Common myeloid progenitor, CD34-positive (primary cell): ENCODE measurements at regions of chr15 and their contacts with region 1.

Region 1: GRCh38 chr15:74768771-74769342 is 13.0 kb upstream of the CSK start:
- DNase-seq: peak in 2 of 3 donors; percentile 68 to 69
- H3K4me3 ChIP-seq: peak overlapping the region in 2 of 7 experiments; percentile 26 to 48
- H3K27ac ChIP-seq: no peak overlapping the region
- H3K4me1 ChIP-seq: peaks cover 0 to 34% (median 16%) of the 10 kb centered on the region in 4 experiments
- H3K27me3 ChIP-seq: peaks cover 0 to 4% (median 0%) of the 10 kb centered on the region in 5 experiments

Region 2: GRCh38 chr15:74251131-74251811 is 517.6 kb before region 1 on chr15:
- CTCF ChIA-PET with region 1: no interaction called
- POLR2A ChIA-PET with region 1: no interaction called
- DNase-seq: no peak
- H3K4me3 ChIP-seq: no peak overlapping the region
- H3K27ac ChIP-seq: no peak overlapping the region
- H3K4me1 ChIP-seq: no peaks in the 10 kb centered on the region
- H3K27me3 ChIP-seq: peaks cover 0 to 23% (median 6%) of the 10 kb centered on the region in 5 experiments

Region 3: DNA sequence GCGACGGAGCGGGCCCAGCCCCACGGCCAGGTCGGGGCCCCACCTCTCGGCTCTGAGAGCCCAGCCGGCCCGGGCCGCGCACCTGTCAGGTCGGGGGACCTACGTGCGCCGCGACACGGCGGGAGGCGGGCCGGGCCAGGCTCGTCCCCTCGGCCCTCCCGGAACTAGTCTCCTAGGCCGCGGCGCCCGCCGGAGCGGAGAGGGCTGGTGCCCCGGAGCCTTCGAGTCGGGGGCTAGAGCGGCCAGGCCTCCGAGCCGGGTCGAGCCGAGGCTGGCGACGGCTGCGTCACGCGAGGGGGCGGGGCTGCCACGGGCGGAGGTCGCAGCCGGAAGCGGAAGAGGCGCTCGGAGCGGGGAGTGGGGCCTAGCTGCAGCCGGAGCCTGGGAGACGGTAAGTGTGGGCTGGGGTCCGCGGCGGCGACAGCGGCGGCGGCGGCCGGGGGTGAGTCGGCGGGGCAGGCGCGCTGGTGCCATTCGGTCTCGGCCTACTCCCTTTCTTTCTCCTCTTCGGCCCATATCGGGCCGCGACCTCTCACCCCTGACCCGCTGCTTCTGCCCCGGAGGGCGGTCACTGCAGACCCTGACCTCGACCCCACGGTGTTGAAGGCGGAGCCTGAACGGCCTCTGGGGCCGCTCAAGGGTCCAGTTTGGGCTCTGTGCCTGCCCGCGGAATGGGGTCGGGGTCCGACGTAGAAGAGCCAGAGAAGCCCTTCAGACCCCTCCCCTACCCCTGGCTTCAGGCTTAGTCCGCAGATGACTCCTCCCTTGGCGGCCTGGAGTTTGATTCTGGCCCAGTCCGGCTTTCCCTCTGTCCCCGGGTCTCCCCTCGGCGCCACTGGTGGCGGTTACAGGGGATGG is 153.1 kb before region 1 on chr15 and contains the start of gene CLK3:
- CTCF ChIA-PET with region 1: interaction called, 14 read pairs
- POLR2A ChIA-PET with region 1: interaction called, 5 read pairs
- DNase-seq: peak; percentile 96 to 97 (median 97)
- H3K4me3 ChIP-seq: peak within 1 kb of the TSS; percentile 62 to 98 (median 95)
- H3K27ac ChIP-seq: peak within 1 kb of the TSS; percentile 97 to 99
- H3K4me1 ChIP-seq: peaks cover 8 to 38% (median 30%) of the 10 kb centered on the region in 4 experiments
- H3K27me3 ChIP-seq: no peaks in the 10 kb centered on the region

Region 4: DNA sequence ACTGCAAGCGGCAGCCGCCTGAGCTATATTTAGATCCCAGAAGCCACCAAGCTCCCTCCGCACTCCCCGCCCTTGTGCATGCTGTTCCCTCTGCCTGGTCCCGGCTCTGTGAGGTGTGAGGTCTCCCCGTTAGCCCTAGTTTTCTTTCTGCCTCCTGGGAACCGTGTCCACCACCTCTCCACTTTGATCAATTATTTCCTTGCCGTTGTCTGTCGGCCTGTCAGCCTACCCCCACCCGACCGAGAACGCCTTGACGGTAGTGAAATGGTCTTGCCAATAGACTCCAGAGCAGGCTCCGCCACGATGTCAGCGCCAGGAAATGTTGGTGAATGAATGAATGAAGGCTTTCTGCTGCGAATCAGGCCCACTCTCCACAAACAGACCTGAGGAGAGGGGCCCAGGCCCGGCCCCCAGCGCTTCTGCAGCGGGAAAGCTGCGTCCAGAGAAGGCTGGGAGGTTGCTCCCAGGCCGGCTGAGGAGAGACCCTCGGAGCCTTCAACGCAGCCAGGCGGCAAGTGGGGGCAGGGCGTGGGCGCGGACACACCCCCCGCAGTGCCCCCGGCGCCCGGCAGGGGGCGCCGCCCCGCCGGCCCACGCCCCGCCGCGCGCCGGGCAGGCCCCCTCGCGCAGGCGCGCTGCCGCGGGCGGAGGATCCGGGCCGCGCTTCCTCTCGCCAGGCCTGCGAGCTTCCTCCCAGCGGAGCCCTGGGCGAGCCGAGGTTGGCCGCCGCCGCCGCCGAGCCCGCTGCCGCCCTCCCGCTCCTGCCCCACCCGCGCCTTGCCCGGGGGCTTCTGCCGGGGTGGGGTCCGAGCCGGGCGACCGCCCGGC is 12.8 kb after region 1 on chr15 and contains the start of gene CSK:
- CTCF ChIA-PET with region 1: interaction called, 1,027 read pairs
- POLR2A ChIA-PET with region 1: interaction called, 29 read pairs
- DNase-seq: peak; percentile 72 to 84 (median 81)
- H3K4me3 ChIP-seq: peak within 1 kb of the TSS; percentile 59 to 97 (median 86)
- H3K27ac ChIP-seq: peak within 1 kb of the TSS; percentile 75 to 89
- H3K4me1 ChIP-seq: peaks cover 34 to 91% (median 91%) of the 10 kb centered on the region in 4 experiments
- H3K27me3 ChIP-seq: no peaks in the 10 kb centered on the region

Region 5: GRCh38 chr15:74842581-74843444 is 74.0 kb after region 1 on chr15 and contains the start of gene ULK3:
- CTCF ChIA-PET with region 1: interaction called, 17 read pairs
- POLR2A ChIA-PET with region 1: no interaction called
- DNase-seq: peak; percentile 93 to 97 (median 96)
- H3K4me3 ChIP-seq: peak within 1 kb of the TSS; percentile 76 to 95 (median 81)
- H3K27ac ChIP-seq: peak within 1 kb of the TSS; percentile 46 to 80
- H3K4me1 ChIP-seq: peaks cover 0 to 47% (median 40%) of the 10 kb centered on the region in 4 experiments
- H3K27me3 ChIP-seq: no peaks in the 10 kb centered on the region

Region 6: DNA sequence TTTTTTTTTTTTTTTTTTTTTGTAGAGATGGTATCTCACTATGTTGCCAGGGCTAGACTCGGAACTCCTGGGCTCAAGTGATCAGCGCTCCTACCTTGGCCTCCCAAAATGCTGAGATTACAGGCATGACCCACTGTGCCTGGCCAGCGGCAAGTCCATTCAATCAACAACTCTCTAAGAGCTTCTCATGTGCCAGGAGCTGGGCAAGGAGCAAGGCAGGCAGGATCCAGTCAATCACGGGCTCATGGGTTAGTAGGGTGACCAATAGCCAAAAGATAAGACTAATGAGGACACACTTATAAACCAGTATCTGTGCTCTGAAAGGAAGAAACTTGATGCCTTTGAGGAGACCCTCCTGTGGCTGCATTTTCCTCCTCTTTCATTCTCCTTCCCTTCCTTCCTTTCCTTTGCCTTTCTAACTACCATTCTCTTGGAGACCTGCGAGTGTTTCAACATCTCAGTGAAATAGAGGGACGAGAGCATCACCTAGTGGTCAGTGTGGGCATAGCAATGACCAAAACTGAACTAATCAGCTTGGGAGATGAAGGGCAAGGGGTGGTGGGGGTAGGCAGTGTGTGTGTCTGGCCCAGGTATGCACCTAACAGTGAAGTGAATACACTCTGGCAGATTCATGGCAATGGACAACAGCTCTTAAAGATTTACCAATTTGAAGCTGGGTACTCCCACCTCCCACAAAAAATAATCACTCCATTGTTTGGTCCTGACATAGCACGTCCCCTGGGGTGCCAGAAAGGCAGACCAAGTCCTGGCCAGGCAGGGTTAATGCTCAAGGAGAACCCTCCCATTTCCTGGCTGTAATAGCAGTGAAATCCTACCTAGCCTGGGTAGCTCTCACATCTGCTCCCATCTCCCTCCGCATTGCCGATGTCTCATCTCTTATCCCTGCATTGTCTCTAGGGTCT is 181.5 kb after region 1 on chr15:
- CTCF ChIA-PET with region 1: interaction called, 41 read pairs
- POLR2A ChIA-PET with region 1: no interaction called
- DNase-seq: peak; percentile 76 to 89 (median 78)
- H3K4me3 ChIP-seq: no peak overlapping the region
- H3K27ac ChIP-seq: no peak overlapping the region
- H3K4me1 ChIP-seq: peaks cover 0 to 19% (median 11%) of the 10 kb centered on the region in 4 experiments
- H3K27me3 ChIP-seq: no peaks in the 10 kb centered on the region